T-cell (primary cell): ENCODE measurements at regions of chr18 and their contacts with region 1.

Region 1: DNA sequence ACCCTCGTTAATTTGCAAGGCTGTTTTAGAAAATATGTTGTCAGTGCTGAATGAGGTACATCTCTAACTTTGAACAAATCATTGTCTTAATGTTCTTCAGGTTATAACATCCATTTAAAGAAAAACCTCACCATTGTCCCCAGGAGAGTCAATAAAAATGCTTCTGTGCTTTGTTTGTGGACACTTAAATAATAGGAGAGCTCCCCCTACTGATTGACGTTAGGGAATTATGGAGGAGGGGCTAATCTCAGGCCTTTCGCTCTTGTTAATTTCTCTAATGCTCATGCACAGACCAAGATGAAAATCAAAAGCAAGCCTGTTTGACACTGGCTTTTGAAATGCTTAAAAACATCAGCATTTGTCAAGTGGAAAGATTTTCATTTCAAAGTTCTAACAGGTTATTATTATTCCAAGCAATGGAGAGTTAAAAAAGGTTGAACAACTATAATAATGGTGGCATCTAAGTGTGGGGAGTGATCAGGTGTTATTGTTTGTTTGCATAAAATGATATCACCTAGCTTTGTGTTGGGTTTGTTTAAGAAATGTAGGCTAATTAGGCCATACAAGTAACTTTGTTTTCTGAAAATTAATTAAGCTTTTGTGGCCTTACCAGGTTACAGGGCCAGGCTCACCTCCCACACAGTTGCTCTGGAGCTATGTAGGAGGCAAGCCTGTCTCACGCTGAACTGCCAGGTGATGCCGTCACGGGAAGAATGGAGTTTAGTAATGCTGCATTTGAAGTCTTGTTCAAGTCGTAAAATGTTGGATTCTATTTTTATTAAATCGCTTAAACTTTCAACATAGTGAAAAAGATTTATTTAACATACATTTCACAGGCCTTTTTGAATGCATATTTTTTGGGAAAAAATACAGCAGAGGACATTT is 51.7 kb upstream of the SMIM21 start:
- DNase-seq: peak in 1 of 35 experiments; percentile 68
- ATAC-seq: peak; percentile 55 to 70 (median 65)
- H3K4me3 ChIP-seq: no peak overlapping the region
- H3K4me3 Mint-ChIP-seq: no peak overlapping the region
- H3K27ac ChIP-seq: no peak overlapping the region
- H3K27ac Mint-ChIP-seq: no peak overlapping the region
- H3K4me1 ChIP-seq: no peaks in the 10 kb centered on the region
- H3K4me1 Mint-ChIP-seq: peaks cover 0 to 4% (median 0%) of the 10 kb centered on the region in 3 donors
- H3K27me3 ChIP-seq: no peaks in the 10 kb centered on the region
- H3K27me3 Mint-ChIP-seq: peaks cover 11 to 18% of the 10 kb centered on the region in 2 donors

Region 2: GRCh38 chr18:74652392-74652988 is 826.7 kb before region 1 on chr18:
- CTCF ChIA-PET with region 1: interaction called, 7 to 17 read pairs
- POLR2A ChIA-PET with region 1: no interaction called
- DNase-seq: peak in 1 of 35 experiments; percentile 59
- ATAC-seq: peak in 2 of 4 experiments; percentile 34 to 40
- H3K4me3 ChIP-seq: no peak overlapping the region
- H3K4me3 Mint-ChIP-seq: no peak overlapping the region
- H3K27ac ChIP-seq: no peak overlapping the region
- H3K27ac Mint-ChIP-seq: no peak overlapping the region
- H3K4me1 ChIP-seq: no peaks in the 10 kb centered on the region
- H3K4me1 Mint-ChIP-seq: peaks cover 0 to 4% (median 1%) of the 10 kb centered on the region in 3 donors
- H3K27me3 ChIP-seq: no peaks in the 10 kb centered on the region
- H3K27me3 Mint-ChIP-seq: no peaks in the 10 kb centered on the region

Region 3: GRCh38 chr18:74896390-74896991 is 582.7 kb before region 1 on chr18:
- CTCF ChIA-PET with region 1: interaction called, 3 to 19 read pairs
- POLR2A ChIA-PET with region 1: no interaction called
- DNase-seq: peak in 34 of 35 experiments; percentile 7 to 66 (median 33)
- ATAC-seq: peak; percentile 76 to 91 (median 80)
- H3K4me3 ChIP-seq: no peak overlapping the region
- H3K4me3 Mint-ChIP-seq: no peak overlapping the region
- H3K27ac ChIP-seq: no peak overlapping the region
- H3K27ac Mint-ChIP-seq: peak overlapping the region in 1 of 2 donors; percentile 1
- H3K4me1 ChIP-seq: no peaks in the 10 kb centered on the region
- H3K4me1 Mint-ChIP-seq: peaks cover 6 to 14% (median 9%) of the 10 kb centered on the region in 3 donors
- H3K27me3 ChIP-seq: no peaks in the 10 kb centered on the region
- H3K27me3 Mint-ChIP-seq: no peaks in the 10 kb centered on the region